PC-9 (cell line): ENCODE measurements at regions of chr20 and their contacts with region 1.

Region 1: GRCh38 chr20:3398681-3399252 is 8.7 kb downstream of the DNAAF9 start:
- DNase-seq: no peak
- H3K4me3 ChIP-seq: no peak overlapping the region
- H3K27ac ChIP-seq: no peak overlapping the region
- H3K4me1 ChIP-seq: no peaks in the 10 kb centered on the region
- H3K27me3 ChIP-seq: no peaks in the 10 kb centered on the region
- CTCF ChIP-seq: no peak

Region 2: DNA sequence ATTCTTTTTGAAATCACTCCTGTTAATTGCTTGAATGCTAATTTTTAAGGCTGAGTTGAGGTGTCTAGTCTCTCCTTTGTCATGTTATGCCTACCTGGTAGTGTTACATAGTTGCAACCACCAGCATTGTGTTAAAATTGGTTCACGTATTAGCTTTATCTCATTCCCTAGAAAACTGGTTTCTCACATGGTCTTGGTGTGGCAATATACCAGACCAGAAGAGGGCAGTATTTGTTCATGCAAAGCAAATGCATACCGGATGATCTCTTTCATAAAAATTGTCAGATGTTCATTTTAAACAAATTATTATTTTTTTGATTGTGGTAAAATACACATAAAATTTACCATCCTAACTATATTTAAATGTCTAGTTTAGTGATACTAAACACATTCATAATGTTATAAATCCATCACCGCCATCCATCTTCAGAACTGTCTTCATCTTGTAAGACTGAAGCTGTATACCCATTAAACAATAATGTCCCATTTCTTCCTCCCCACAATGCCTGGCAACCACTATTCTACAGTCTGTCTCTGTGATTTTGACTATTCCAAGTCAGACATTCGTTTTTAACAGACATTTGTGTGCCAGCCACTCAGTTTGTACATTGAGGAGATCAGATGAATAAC is 164.9 kb after region 1 on chr20:
- CTCF ChIA-PET with region 1: no interaction called
- POLR2A ChIA-PET with region 1: interaction called, 13 read pairs
- intact Hi-C with region 1: no loop called
- DNase-seq: peak in 1 of 2 experiments; percentile 15
- H3K4me3 ChIP-seq: no peak overlapping the region
- H3K27ac ChIP-seq: no peak overlapping the region
- H3K4me1 ChIP-seq: no peaks in the 10 kb centered on the region
- H3K27me3 ChIP-seq: no peaks in the 10 kb centered on the region
- CTCF ChIP-seq: peak; percentile 80